Body of pancreas (tissue), 4 donors: ENCODE measurements at regions of chr20 and their contacts with region 1.

Region 1: GRCh38 chr20:6636209-6637159 is 131.0 kb upstream of the BMP2 start:
- DNase-seq: peak; percentile 39 to 74 (median 56)
- ATAC-seq: peak; percentile 97
- H3K4me3 ChIP-seq: no peak overlapping the region
- H3K27ac ChIP-seq: no peak overlapping the region
- H3K4me1 ChIP-seq: peaks cover 9% of the 10 kb centered on the region
- H3K27me3 ChIP-seq: no peaks in the 10 kb centered on the region
- CTCF ChIP-seq: peak; percentile 42 to 89 (median 76)
- POLR2A ChIP-seq: no peak

Region 2: GRCh38 chr20:6819605-6820004 is 183.1 kb after region 1 on chr20:
- intact Hi-C with region 1: loop called (anchors 10 kb)
- DNase-seq: peak; percentile 26 to 51 (median 35)
- ATAC-seq: peak; percentile 77
- H3K4me3 ChIP-seq: no peak overlapping the region
- H3K27ac ChIP-seq: no peak overlapping the region
- H3K4me1 ChIP-seq: no peaks in the 10 kb centered on the region
- H3K27me3 ChIP-seq: peaks cover 0 to 9% of the 10 kb centered on the region in 2 donors
- CTCF ChIP-seq: peak in 6 of 7 experiments; percentile 29 to 83 (median 62)
- POLR2A ChIP-seq: no peak